Heart right ventricle (tissue), 16 donors: ENCODE measurements at regions of chr5 and their contacts with region 1.

Region 1: GRCh38 chr5:113513384-113514288 is at the start of gene YTHDC2:
- DNase-seq: peak; percentile 88 to 89
- ATAC-seq: peak; percentile 98 to 99 (median 98)
- H3K4me3 ChIP-seq: peak within 1 kb of the TSS; percentile 65 to 93 (median 86)
- H3K27ac ChIP-seq: peak within 1 kb of the TSS; percentile 72 to 97 (median 95)
- H3K4me1 ChIP-seq: peaks cover 0 to 36% (median 26%) of the 10 kb centered on the region in 9 donors
- H3K27me3 ChIP-seq: peaks cover 0 to 18% (median 0%) of the 10 kb centered on the region in 7 donors
- CTCF ChIP-seq: peak in 7 of 9 donors; percentile 5 to 55 (median 42)
- total RNA-seq, gene YTHDC2: 10.6 to 20.9 (median 14.0) TPM

Region 2: DNA sequence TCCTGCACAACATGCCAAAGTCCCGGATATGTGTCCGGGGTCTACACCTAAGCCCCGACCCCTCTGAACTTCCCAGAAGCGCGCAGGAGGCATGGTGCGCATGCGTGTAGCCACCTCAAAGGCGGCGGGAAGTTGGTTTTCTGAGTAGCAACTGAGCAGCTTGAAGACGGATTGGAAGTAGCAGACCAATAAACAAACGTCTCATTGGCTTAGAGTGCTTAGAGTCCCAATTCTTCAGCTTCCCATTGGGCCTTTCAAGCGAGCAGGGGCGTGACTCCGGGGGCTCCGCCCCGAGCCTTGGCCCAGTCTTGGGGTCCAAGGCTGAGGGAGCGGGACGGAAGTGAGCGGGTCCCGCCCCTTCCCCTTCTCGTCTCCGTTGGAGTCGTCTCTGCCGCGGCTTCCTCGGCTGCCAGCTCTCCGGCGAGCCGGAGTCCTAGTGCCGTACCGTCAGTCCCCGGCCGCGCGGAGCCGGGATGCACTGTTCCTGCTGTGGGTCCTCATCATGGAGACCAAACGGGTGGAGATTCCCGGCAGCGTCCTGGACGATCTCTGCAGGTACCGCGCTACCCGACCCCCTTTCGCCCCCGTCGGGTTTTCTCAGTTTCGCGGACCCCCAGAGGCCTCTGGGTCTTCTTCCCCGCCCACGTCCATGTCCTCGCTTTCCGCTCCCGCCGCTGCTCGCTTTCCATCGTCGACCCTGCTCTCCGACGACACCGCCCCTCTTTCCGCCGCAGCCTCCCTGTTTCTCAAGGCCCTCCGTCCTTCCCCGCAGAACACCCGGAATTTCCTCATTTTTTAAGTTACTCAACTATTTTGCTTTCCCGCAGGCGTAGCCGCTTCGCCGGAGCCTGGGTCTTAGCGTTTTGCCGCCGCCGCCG is 537.0 kb before region 1 on chr5 and contains the start of gene DCP2:
- intact Hi-C with region 1: loop called in 2 of 10 experiments (anchors 5 to 10 kb)
- DNase-seq: peak; percentile 94 to 96
- ATAC-seq: peak; percentile 99
- H3K4me3 ChIP-seq: peak within 1 kb of the TSS; percentile 73 to 94 (median 86)
- H3K27ac ChIP-seq: peak within 1 kb of the TSS; percentile 86 to 94 (median 92)
- H3K4me1 ChIP-seq: peaks cover 4 to 43% (median 35%) of the 10 kb centered on the region in 9 donors
- H3K27me3 ChIP-seq: no peaks in the 10 kb centered on the region
- CTCF ChIP-seq: no peak
- total RNA-seq, gene DCP2: 13.7 to 24.5 (median 16.3) TPM

Region 3: GRCh38 chr5:112983363-112983762 is 530.3 kb before region 1 on chr5:
- intact Hi-C with region 1: loop called in 2 of 10 experiments (anchors 5 to 10 kb)
- DNase-seq: no peak
- ATAC-seq: no peak
- H3K4me3 ChIP-seq: no peak overlapping the region
- H3K27ac ChIP-seq: no peak overlapping the region
- H3K4me1 ChIP-seq: peaks cover 0 to 50% (median 36%) of the 10 kb centered on the region in 9 donors
- H3K27me3 ChIP-seq: no peaks in the 10 kb centered on the region
- CTCF ChIP-seq: no peak

Region 4: DNA sequence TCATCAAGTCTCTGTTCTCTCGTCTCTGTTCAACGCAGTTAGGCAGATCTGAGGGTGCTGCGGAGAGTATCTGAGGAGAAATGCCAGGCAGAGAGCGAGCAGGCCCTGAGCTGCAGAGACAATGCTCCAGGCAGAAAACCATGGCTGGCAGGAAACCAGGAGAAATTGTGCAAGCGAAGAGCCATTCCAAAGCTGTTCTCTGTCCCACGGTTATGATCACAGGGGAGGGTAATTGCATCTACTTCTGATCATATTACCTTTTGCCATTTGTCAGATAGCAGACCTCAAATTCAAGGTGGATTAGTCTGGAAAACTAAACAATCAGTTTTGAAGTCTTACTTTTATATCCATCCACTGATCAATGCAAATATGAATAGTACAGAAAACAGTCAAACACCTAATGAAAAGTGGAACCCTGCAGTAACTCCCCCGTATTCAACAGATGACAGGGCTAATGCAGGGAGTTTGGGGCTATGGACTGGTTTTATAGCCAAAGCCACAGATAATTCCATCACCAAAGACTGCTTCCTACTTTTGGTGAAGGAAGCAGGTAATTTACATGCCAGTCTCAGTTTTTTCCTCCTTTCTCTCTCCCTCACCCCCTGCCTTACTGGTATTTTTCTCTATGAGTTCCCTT is 309.0 kb before region 1 on chr5:
- intact Hi-C with region 1: loop called in 2 of 10 experiments (anchors 5 to 10 kb)
- DNase-seq: peak; percentile 38 to 45
- ATAC-seq: peak in 6 of 8 donors; percentile 12 to 61 (median 42)
- H3K4me3 ChIP-seq: no peak overlapping the region
- H3K27ac ChIP-seq: peak overlapping the region in 6 of 10 donors; percentile 3 to 76 (median 43)
- H3K4me1 ChIP-seq: peaks cover 2 to 93% (median 73%) of the 10 kb centered on the region in 9 donors
- H3K27me3 ChIP-seq: no peaks in the 10 kb centered on the region
- CTCF ChIP-seq: no peak

Region 5: DNA sequence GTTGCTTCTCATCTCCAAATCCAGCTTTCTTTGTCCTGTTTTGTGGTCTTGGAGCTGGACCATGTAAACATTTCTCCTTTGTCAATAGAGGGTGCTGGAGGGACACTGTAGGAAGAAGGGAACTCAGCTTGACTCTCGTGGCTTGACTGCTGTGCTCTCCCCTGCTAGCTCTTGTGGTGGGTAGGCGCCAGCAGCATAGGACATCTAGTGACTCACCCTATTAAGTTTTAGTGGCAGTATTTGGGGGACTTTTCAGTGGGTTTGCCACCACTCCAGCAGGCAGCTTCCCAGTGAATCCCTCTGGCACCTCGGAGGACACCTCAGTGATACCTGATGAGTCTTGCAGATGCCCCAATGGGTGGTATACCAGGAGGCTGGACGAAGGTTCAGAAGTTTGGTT is 176.7 kb before region 1 on chr5:
- intact Hi-C with region 1: loop called in 7 of 10 experiments (anchors 2 to 5 kb)
- DNase-seq: peak; percentile 20 to 54
- ATAC-seq: peak; percentile 74 to 90 (median 88)
- H3K4me3 ChIP-seq: no peak overlapping the region
- H3K27ac ChIP-seq: no peak overlapping the region
- H3K4me1 ChIP-seq: peaks cover 0 to 17% (median 0%) of the 10 kb centered on the region in 9 donors
- H3K27me3 ChIP-seq: no peaks in the 10 kb centered on the region
- CTCF ChIP-seq: peak; percentile 24 to 72 (median 61)

Region 6: GRCh38 chr5:113378959-113379541 is 134.6 kb before region 1 on chr5:
- intact Hi-C with region 1: loop called (anchors 1 to 10 kb)
- DNase-seq: peak in 1 of 2 donors; percentile 57
- ATAC-seq: peak in 3 of 8 donors; percentile 46 to 71 (median 52)
- H3K4me3 ChIP-seq: no peak overlapping the region
- H3K27ac ChIP-seq: no peak overlapping the region
- H3K4me1 ChIP-seq: peaks cover 0 to 30% (median 0%) of the 10 kb centered on the region in 9 donors
- H3K27me3 ChIP-seq: peaks cover 0 to 29% (median 0%) of the 10 kb centered on the region in 7 donors
- CTCF ChIP-seq: peak; percentile 45 to 84 (median 76)

Region 7: DNA sequence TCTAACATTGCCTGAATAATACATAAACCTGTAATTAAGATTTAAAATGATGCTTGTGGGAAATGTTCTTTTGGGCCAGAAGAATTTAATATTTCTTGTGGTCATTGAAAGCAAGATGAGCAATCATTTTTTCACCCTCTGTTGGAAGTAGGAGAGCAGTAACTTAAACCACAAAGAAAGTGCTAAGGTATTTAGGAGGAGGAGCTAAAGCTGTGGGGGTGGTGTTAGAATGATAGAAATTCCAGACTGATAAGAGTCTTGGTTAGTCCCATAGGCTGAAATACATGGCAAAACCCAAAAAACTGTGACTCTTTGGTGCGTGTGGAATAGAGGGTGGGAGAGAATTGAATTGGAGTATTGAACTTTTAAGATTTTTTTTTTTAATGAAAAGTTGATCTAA is 246.8 kb after region 1 on chr5:
- intact Hi-C with region 1: no loop called
- DNase-seq: no peak
- ATAC-seq: no peak
- H3K4me3 ChIP-seq: no peak overlapping the region
- H3K27ac ChIP-seq: no peak overlapping the region
- H3K4me1 ChIP-seq: no peaks in the 10 kb centered on the region
- H3K27me3 ChIP-seq: peaks cover 0 to 10% (median 0%) of the 10 kb centered on the region in 7 donors
- CTCF ChIP-seq: no peak

Region 8: DNA sequence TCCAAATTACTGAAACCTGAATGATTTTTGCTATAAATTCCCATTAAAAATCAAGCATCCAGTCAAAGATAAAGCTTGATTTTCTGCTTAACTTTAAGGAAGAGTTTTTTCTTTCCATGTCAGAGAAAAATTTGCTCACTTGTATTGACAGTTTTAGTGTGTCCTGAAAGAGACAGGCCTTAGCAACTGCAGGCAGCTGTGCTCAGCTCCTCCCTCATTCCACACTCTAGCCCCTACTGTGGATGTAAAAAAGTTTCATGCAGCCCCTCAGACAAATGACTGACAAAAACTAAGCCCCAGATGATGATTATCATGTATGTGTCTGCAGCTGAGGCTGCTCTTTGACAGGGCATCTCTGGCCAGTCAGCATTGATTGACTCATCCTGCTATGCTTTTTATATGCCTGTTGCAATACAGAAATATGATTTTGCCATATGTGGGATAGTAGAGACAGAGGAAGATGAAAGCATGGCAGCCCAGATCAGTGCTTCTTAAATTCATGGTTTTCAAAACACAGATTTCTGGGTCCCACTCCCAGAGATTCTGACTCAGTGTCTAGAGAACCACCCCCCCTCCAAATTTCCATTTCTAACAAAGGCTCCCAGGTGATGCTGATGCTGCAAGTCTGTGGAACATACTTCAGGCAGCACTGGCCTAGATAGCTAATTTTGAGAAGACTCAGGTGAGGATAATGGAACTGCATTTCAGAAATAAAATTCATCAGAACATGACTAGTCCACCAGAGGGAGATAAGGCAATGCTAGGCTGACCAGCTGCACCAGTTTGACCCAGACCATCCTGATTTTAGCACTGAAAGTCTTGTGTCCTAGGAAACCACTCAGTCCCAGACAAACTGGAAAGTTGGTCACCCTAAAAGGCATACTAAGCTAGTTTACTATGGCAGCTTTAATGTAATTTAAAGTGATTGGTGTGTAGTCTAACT is 549.6 kb after region 1 on chr5:
- intact Hi-C with region 1: no loop called
- DNase-seq: no peak
- ATAC-seq: no peak
- H3K4me3 ChIP-seq: no peak overlapping the region
- H3K27ac ChIP-seq: no peak overlapping the region
- H3K4me1 ChIP-seq: no peaks in the 10 kb centered on the region
- H3K27me3 ChIP-seq: peaks cover 0 to 3% (median 0%) of the 10 kb centered on the region in 7 donors
- CTCF ChIP-seq: no peak